ENCODE measurements at regions of chr14 and their contacts with region 1.

Region 1: GRCh38 chr14:67619446-67620216 is at the start of gene ARG2:
- DNase-seq: peak; percentile 89 to 100 (median 94)
- H3K4me3 ChIP-seq: peak within 1 kb of the TSS; percentile 56 to 95 (median 80)
- H3K27ac ChIP-seq: peak within 1 kb of the TSS in 57 of 59 donors; percentile 27 to 92 (median 76)
- H3K27me3 ChIP-seq: no peaks in the 10 kb centered on the region
- CTCF ChIP-seq: peak in 24 of 56 donors; percentile 7 to 57 (median 30)
- total RNA-seq, gene ARG2: 5.2 to 42.6 (median 14.9) TPM

Region 2: DNA sequence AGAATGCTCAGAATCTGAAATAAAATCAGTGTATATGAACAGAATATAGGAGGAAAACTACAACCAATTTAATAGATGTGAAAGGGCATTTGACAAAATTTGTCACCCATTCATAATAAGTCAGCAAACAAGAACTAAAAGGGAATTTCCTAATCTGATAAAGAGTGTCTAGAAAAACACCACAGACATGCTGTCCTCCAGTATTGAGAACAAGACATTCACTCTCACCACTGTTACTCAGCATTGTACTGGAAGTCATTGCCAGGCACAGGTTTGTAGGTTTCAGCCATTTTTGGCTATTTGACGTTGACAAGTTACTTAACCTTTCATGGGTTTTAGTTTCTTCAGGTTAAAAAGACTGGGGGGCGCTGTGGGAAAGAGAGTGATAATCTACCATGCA is 246.3 kb before region 1 on chr14:
- intact Hi-C with region 1: no loop called
- DNase-seq: no peak
- H3K4me3 ChIP-seq: no peak overlapping the region
- H3K27ac ChIP-seq: no peak overlapping the region
- H3K27me3 ChIP-seq: no peaks in the 10 kb centered on the region
- CTCF ChIP-seq: no peak

Region 3: DNA sequence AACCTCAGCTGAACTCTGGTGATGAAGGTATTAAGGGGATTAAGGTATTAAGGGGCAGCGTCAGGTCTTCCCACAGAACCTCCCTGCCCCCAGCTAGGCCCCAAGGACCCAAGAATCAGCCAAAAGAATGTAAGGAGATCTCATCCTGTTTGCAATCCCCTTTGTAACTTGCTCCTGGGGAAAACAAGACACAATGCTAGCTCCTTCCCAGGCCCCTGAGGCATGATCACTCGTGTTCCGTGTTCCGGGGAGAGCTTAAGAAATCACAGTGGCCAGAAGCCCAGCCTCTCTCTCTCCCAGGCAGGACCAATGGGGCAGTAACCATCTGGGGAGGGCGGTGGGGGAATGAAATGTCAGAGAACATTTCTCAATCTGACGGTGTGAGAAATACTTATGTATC is 52.7 kb before region 1 on chr14:
- intact Hi-C with region 1: no loop called
- DNase-seq: peak in 2 of 10 donors; percentile 42 to 46
- H3K4me3 ChIP-seq: peak overlapping the region in 2 of 59 donors; percentile 5 to 26
- H3K27ac ChIP-seq: peak overlapping the region in 56 of 59 donors; percentile 37 to 90 (median 77)
- H3K27me3 ChIP-seq: no peaks in the 10 kb centered on the region
- CTCF ChIP-seq: no peak

Region 4: DNA sequence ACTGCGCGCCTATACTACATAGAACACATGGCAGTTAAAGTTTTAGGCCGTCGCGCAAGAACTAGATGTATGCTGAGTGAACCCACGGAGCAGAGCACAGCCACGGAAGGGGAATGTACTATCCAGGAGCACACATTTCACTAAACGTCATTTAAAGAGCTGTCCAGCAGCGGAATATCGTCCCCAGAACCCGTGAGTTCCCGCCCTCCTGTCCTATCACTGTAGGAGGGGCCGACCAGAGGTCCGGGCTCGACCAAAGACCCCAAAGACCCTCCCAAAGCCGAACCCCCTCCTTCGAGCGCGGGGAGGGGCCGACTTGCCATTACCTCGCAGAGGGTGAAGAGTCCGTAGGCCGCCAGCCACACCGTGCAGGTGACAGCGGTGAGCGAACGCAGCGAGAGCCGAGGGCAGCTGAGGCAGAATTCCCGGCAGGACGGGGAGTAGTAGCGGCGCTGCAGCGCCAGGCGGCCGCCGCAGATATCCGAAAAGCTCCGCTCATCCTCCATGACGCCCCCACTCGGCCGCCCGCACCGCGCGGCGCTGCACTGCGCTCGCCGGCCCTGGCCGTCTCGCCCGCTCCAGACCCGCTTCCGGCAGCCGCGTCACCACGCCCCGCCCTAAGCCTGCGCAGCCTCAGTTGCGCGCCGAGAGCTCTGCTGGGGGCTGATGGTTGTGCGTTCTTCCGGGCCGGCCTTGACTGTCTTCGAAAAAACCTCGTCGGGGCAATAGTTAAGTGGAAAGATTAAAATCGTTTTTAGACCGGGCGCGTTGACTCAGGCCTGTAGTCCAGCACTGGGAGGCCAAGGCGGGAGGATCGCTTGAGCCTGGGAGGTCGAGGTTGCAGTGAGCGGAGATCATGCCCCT is 19.7 kb before region 1 on chr14 and contains the start of gene PIGH:
- intact Hi-C with region 1: loop called in 1 of 2 experiments (anchors 1 kb)
- DNase-seq: peak; percentile 85 to 95 (median 88)
- H3K4me3 ChIP-seq: peak within 1 kb of the TSS; percentile 54 to 100 (median 93)
- H3K27ac ChIP-seq: peak within 1 kb of the TSS; percentile 58 to 95 (median 88)
- H3K27me3 ChIP-seq: no peaks in the 10 kb centered on the region
- CTCF ChIP-seq: peak; percentile 44 to 86 (median 70)
- total RNA-seq, gene PIGH: 19.8 to 43.6 (median 29.0) TPM

Region 5: DNA sequence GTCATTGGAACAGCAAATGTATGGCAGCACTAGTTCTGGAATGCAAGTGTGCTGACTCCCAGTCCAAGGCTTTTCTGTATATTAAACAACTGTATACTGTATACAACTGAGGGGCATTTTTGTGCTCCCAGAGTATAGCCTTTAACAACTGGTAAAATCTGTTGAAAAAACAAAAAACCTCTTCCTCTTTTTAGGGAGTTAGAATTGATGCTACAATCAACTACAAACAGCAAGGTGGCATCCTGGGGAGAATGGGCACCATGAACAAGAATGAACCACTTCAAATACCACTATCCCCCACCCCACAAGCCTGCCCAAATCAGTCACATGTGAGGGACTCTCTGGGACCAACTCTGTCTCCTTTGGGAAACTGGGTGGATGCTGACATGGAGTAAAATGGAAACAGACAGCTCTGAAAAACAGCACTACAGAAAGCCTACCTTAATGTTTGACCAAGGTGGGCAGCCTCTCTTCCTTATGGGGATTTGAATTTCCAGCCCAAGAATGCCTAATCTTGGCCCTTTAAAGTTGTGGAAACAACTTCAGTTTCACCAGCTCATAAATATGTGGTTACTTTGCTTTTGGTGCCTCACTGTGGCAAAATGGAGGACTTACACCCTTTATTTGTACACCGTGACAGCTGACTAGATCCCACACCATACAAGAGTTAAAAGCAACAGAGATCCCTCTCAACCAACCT is 47.3 kb after region 1 on chr14:
- intact Hi-C with region 1: loop called (anchors 5 kb)
- DNase-seq: peak in 2 of 10 donors; percentile 28 to 29
- H3K4me3 ChIP-seq: no peak overlapping the region
- H3K27ac ChIP-seq: peak overlapping the region in 2 of 59 donors; percentile 11 to 30
- H3K27me3 ChIP-seq: no peaks in the 10 kb centered on the region
- CTCF ChIP-seq: peak in 55 of 56 donors; percentile 50 to 83 (median 67)

Region 6: DNA sequence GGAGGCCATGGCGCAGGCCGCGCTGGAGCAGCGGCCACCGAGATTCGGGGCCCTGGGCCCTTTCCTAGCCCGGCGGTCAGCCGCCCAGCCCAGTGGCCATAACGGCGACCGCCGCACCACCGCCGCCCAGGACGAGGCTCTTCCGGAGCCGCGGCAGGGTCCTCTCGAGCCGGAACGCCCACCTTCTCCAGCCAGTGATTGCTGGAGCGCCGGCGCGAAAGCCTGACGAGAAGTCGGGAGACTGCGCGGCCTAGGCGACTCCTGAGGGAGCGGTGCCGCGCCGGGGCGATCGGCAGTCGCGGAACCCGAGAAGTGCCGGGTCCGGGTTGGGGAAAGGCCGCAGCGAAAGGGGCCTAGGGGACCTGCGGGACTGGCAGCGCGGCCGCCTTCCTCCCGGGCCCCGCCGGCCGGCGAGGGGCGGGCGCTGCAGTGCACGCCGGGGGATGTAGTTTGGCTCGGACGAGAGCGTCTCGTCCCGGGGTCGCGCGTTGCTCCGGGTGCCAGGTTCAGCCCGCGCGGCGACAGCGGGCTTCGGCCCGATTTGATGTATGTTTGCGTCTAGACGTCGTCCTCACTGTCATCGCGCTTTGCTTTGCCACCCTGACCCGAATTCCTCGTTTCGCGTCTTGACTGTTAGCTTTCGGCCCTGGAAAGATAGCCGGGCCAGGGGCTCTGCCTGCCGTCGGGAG is 55.0 kb after region 1 on chr14 and contains the start of gene VTI1B:
- intact Hi-C with region 1: loop called (anchors 5 kb)
- DNase-seq: peak; percentile 57 to 87 (median 76)
- H3K4me3 ChIP-seq: peak within 1 kb of the TSS; percentile 78 to 100 (median 94)
- H3K27ac ChIP-seq: peak within 1 kb of the TSS; percentile 93 to 100 (median 99)
- H3K27me3 ChIP-seq: no peaks in the 10 kb centered on the region
- CTCF ChIP-seq: peak in 30 of 56 donors; percentile 1 to 51 (median 19)
- total RNA-seq, gene VTI1B: 101 to 177 (median 140) TPM

Region 7: GRCh38 chr14:67837011-67837624 is 217.5 kb after region 1 on chr14:
- intact Hi-C with region 1: no loop called
- DNase-seq: no peak
- H3K4me3 ChIP-seq: no peak overlapping the region
- H3K27ac ChIP-seq: no peak overlapping the region
- H3K27me3 ChIP-seq: no peaks in the 10 kb centered on the region
- CTCF ChIP-seq: peak in 55 of 56 donors; percentile 26 to 69 (median 46)

Measured in dorsolateral prefrontal cortex (tissue), 120 donors.